ENCODE measurements at regions of chr12 and their contacts with region 1.

Region 1: DNA sequence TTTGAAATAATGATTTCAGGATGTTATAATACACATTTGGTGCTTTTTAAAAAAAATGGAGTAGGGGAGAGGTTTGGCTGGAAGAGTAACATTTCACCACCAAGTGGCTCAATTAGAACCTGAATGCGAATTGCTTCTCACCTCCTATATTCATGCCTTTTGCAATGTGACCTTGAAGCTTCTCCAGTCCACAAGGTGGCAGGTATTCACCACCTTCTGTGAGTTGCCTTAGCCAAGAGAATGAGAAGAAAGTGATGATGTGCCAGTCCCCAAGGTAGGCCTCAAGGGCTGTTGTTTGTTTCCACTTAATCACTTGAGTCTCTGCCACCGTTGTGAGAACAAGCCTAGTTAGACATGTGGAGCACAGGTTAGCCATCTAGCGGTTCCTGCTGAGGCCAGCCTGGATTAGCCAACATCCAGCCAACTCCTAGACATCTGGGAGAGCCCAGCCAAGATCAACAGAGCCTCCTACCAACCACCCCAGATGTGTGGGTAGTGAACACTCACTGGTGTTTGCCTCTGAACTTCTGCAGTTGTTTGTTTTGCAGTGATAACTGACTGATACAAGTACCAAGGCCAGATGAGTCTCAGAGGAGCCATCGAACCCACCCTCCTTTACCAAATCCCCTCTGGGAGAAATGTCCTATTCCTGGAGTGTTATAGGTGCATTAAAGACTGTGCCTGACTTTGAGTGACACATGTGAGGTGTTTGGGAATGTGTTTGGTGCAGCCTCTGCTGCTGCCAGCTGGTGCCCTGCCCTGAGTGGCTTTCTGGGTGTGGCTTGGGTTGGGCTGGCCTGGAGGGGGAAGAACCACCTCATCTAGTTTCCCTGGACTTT is 132.5 kb upstream of the RFLNA start:
- DNase-seq: peak in 1 of 4 experiments; percentile 13
- ATAC-seq: no peak
- H3K4me3 ChIP-seq: no peak overlapping the region
- H3K27ac ChIP-seq: no peak overlapping the region
- H3K4me1 ChIP-seq: no peaks in the 10 kb centered on the region; a peak in 1 of 5 replicates
- H3K27me3 ChIP-seq: peaks cover 8 to 37% of the 10 kb centered on the region in 2 experiments; a peak in 4 of 5 replicates
- CTCF ChIP-seq: peak; percentile 14 to 31 (median 16); a peak in 3 of 6 replicates
- EP300 ChIP-seq: no peak
- POLR2A ChIP-seq: no peak
- RAD21 ChIP-seq: peak in 1 of 2 experiments; percentile 42; a peak in 2 of 4 replicates

Region 2: GRCh38 chr12:124053851-124054250 is 108.5 kb before region 1 on chr12:
- CTCF ChIA-PET with region 1: no interaction called
- POLR2A ChIA-PET with region 1: no interaction called
- in situ Hi-C with region 1: no loop called
- intact Hi-C with region 1: loop called (anchors 10 kb)
- DNase-seq: peak in 3 of 4 experiments; percentile 25 to 46 (median 43)
- ATAC-seq: peak; percentile 91
- H3K4me3 ChIP-seq: no peak overlapping the region
- H3K27ac ChIP-seq: no peak overlapping the region
- H3K4me1 ChIP-seq: no peaks in the 10 kb centered on the region
- H3K27me3 ChIP-seq: peaks cover 36 to 48% of the 10 kb centered on the region in 2 experiments
- CTCF ChIP-seq: peak; percentile 66 to 74 (median 74)
- EP300 ChIP-seq: no peak
- POLR2A ChIP-seq: no peak
- RAD21 ChIP-seq: peak; percentile 74 to 83

Region 3: DNA sequence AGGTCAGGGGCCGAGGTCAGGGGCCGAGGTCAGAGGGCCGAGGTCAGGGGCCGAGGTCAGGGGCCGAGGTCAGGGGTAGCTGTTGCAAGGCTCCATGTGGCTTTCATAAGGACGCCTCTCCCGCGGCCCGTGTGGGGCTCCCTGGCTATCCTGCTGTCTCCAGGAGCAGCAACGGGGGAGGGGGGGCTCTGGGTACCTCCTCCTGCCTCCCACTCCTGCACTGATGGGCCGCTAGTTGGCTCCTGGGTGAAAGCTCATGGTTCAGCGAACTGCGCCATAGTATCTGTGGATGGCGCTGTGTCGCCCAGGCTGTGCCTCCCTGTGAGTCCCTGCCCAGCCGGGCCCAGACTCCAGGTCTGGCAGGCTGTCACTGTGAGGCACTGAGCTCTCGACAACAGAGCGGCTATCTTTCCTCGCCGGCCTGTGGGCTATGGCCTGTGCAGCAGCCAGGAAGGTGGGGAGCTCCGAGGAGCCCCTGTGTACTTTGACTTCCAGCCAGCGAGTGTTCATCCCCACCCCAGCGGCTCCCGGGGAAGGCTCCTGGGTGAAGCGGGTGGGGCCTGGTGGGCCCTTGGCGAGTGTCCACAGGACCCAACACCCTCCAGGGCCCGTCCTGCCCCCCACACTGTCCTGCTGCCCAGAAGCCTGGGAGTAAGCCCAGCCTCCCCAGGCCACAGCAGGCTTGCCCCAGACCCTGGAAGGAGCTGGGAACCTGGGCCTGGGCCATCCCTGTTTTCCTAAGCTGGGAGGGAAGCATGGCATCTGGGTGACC is 140.6 kb after region 1 on chr12:
- CTCF ChIA-PET with region 1: no interaction called
- POLR2A ChIA-PET with region 1: no interaction called
- in situ Hi-C with region 1: no loop called
- intact Hi-C with region 1: loop called (anchors 10 kb)
- DNase-seq: no peak
- ATAC-seq: no peak; the same call in 1 of the 3 replicates
- H3K4me3 ChIP-seq: no peak overlapping the region
- H3K27ac ChIP-seq: no peak overlapping the region
- H3K4me1 ChIP-seq: peaks cover 0 to 22% of the 10 kb centered on the region in 2 experiments; a peak in 2 of 5 replicates
- H3K27me3 ChIP-seq: peaks cover 39 to 91% of the 10 kb centered on the region in 2 experiments; a peak in 4 of 5 replicates
- CTCF ChIP-seq: peak in 1 of 3 experiments; percentile 20; a peak in 1 of 6 replicates
- EP300 ChIP-seq: no peak
- POLR2A ChIP-seq: no peak
- RAD21 ChIP-seq: no peak

Region 4: GRCh38 chr12:124321040-124321481 is 158.7 kb after region 1 on chr12:
- CTCF ChIA-PET with region 1: no interaction called
- POLR2A ChIA-PET with region 1: no interaction called
- in situ Hi-C with region 1: no loop called
- intact Hi-C with region 1: loop called (anchors 2 kb)
- DNase-seq: peak; percentile 61 to 77 (median 74)
- ATAC-seq: peak; percentile 94
- H3K4me3 ChIP-seq: no peak overlapping the region
- H3K27ac ChIP-seq: no peak overlapping the region
- H3K4me1 ChIP-seq: no peaks in the 10 kb centered on the region
- H3K27me3 ChIP-seq: peaks cover 23 to 35% of the 10 kb centered on the region in 2 experiments; a peak in 3 of 5 replicates
- CTCF ChIP-seq: peak; percentile 83 to 93 (median 86)
- EP300 ChIP-seq: no peak
- POLR2A ChIP-seq: no peak
- RAD21 ChIP-seq: peak; percentile 92 to 95

Measured in K562 (cell line).